CD8-positive, alpha-beta T cell (primary cell): ENCODE measurements at regions of chr13 and their contacts with region 1.

Region 1: GRCh38 chr13:30408319-30409101 is 13.8 kb upstream of the UBE2L5 start:
- DNase-seq: peak; percentile 82 to 94 (median 90)
- ATAC-seq: peak; percentile 94
- H3K4me3 ChIP-seq: peak overlapping the region; percentile 31 to 39
- H3K4me3 Mint-ChIP-seq: peak overlapping the region; percentile 72
- H3K27ac ChIP-seq: peak overlapping the region in 1 of 2 experiments; percentile 67
- H3K27ac Mint-ChIP-seq: peak overlapping the region; percentile 86
- H3K4me1 ChIP-seq: peaks cover 14% of the 10 kb centered on the region
- H3K4me1 Mint-ChIP-seq: peaks cover 27% of the 10 kb centered on the region
- H3K27me3 ChIP-seq: no peaks in the 10 kb centered on the region
- H3K27me3 Mint-ChIP-seq: no peaks in the 10 kb centered on the region
- CTCF ChIP-seq: peak; percentile 74

Region 2: DNA sequence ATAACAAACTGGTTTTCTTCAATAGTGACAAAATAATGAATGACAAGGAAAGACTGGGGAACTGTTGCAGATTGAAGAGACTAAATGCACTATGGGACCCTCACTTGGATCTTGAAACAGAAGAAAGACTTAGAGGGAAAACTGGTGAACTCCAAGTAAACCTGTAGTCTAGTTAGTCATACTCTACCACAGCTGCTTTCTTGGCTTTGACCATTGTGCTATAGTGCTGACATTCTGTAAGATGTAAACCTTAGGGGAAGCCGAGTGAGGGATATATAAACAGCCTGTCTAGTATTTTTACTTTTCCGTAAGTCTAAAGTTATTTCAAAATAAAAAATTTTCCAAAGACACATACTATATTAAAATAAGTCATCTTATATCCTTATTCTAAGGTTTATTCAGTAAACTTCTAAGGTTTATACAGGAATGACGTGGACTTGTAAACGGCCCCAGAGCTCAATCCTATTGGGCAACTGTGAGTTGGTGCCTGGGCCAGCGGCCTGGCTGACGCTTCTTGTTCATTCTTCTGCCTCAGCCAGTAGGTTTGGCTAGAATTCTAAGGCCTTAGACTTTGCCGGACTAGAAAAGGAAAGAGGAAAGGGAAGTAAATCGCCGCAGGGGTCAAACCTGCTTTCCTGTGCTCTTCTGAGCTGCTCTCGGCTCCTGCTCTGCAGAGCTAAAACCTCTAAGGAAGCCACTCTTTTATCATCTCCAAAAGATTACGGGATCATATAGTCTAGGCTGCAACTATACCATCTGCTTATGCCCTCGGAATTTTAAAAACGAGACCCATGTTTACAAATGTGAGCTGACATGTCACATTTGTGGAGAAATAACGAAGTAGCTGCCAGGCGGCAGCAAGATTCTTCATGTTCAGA is 19.9 kb before region 1 on chr13:
- CTCF ChIA-PET with region 1: interaction called, 12 read pairs
- POLR2A ChIA-PET with region 1: interaction called, 3 read pairs
- intact Hi-C with region 1: no loop called
- DNase-seq: no peak
- ATAC-seq: no peak
- H3K4me3 ChIP-seq: peak overlapping the region in 1 of 2 experiments; percentile 38
- H3K4me3 Mint-ChIP-seq: peak overlapping the region; percentile 63
- H3K27ac ChIP-seq: peak overlapping the region in 1 of 2 experiments; percentile 11
- H3K27ac Mint-ChIP-seq: peak overlapping the region; percentile 72
- H3K4me1 ChIP-seq: peaks cover 25% of the 10 kb centered on the region
- H3K4me1 Mint-ChIP-seq: peaks cover 54% of the 10 kb centered on the region
- H3K27me3 ChIP-seq: no peaks in the 10 kb centered on the region
- H3K27me3 Mint-ChIP-seq: no peaks in the 10 kb centered on the region
- CTCF ChIP-seq: no peak

Region 3: GRCh38 chr13:30395192-30396084 is 13.1 kb before region 1 on chr13:
- CTCF ChIA-PET with region 1: interaction called, 10 read pairs
- POLR2A ChIA-PET with region 1: interaction called, 7 read pairs
- intact Hi-C with region 1: loop called in 1 of 2 experiments (anchors 1 kb)
- DNase-seq: peak; percentile 44 to 88 (median 79)
- ATAC-seq: peak; percentile 62
- H3K4me3 ChIP-seq: peak overlapping the region; percentile 60 to 80
- H3K4me3 Mint-ChIP-seq: peak overlapping the region; percentile 89
- H3K27ac ChIP-seq: peak overlapping the region; percentile 83 to 84
- H3K27ac Mint-ChIP-seq: peak overlapping the region; percentile 95
- H3K4me1 ChIP-seq: peaks cover 21% of the 10 kb centered on the region
- H3K4me1 Mint-ChIP-seq: peaks cover 50% of the 10 kb centered on the region
- H3K27me3 ChIP-seq: no peaks in the 10 kb centered on the region
- H3K27me3 Mint-ChIP-seq: no peaks in the 10 kb centered on the region
- CTCF ChIP-seq: no peak

Region 4: GRCh38 chr13:30422054-30422839 is 13.7 kb after region 1 on chr13 and contains the start of gene UBE2L5:
- CTCF ChIA-PET with region 1: interaction called, 21 read pairs
- POLR2A ChIA-PET with region 1: interaction called, 9 read pairs
- intact Hi-C with region 1: loop called in 1 of 2 experiments (anchors 1 kb)
- DNase-seq: peak; percentile 31 to 82 (median 59)
- ATAC-seq: peak; percentile 88
- H3K4me3 ChIP-seq: peak within 1 kb of the TSS; percentile 41 to 58
- H3K4me3 Mint-ChIP-seq: peak within 1 kb of the TSS; percentile 88
- H3K27ac ChIP-seq: peak within 1 kb of the TSS; percentile 14 to 24
- H3K27ac Mint-ChIP-seq: peak within 1 kb of the TSS; percentile 82
- H3K4me1 ChIP-seq: peaks cover 4% of the 10 kb centered on the region
- H3K4me1 Mint-ChIP-seq: peaks cover 22% of the 10 kb centered on the region
- H3K27me3 ChIP-seq: no peaks in the 10 kb centered on the region
- H3K27me3 Mint-ChIP-seq: no peaks in the 10 kb centered on the region
- CTCF ChIP-seq: no peak
- total RNA-seq, gene UBE2L5: not detected

Region 5: DNA sequence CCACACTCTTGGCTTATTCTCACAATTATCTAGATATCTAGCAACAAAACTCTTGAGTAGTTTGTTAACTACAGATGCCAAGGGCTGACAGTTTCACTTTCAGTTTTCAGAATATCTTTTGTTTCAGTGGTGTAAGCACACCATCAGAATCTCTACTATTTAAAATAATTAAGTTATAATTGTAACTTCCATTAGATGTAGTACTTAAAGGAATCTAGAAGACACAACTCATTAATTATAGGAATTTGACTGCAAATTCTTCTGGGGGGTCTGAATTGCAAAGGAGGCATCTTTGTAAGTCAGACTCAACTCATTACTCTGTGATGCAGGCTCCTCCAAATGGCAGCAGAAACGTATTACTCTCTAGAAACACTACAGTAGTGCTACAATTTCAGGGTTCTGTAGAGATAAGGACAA is 164.4 kb after region 1 on chr13:
- CTCF ChIA-PET with region 1: no interaction called
- POLR2A ChIA-PET with region 1: interaction called, 3 read pairs
- intact Hi-C with region 1: loop called in 1 of 2 experiments (anchors 2 kb)
- DNase-seq: peak in 4 of 9 experiments; percentile 12 to 72 (median 40)
- ATAC-seq: peak; percentile 57
- H3K4me3 ChIP-seq: peak overlapping the region; percentile 23 to 51
- H3K4me3 Mint-ChIP-seq: peak overlapping the region; percentile 75
- H3K27ac ChIP-seq: peak overlapping the region; percentile 58 to 72
- H3K27ac Mint-ChIP-seq: peak overlapping the region; percentile 91
- H3K4me1 ChIP-seq: peaks cover 27% of the 10 kb centered on the region
- H3K4me1 Mint-ChIP-seq: peaks cover 32% of the 10 kb centered on the region
- H3K27me3 ChIP-seq: no peaks in the 10 kb centered on the region
- H3K27me3 Mint-ChIP-seq: no peaks in the 10 kb centered on the region
- CTCF ChIP-seq: peak; percentile 44

Region 6: GRCh38 chr13:30690282-30691188 is 282.0 kb after region 1 on chr13:
- CTCF ChIA-PET with region 1: no interaction called
- POLR2A ChIA-PET with region 1: no interaction called
- intact Hi-C with region 1: no loop called
- DNase-seq: peak in 3 of 9 experiments; percentile 27 to 53 (median 33)
- ATAC-seq: peak; percentile 51
- H3K4me3 ChIP-seq: peak overlapping the region; percentile 13 to 20
- H3K4me3 Mint-ChIP-seq: peak overlapping the region; percentile 73
- H3K27ac ChIP-seq: no peak overlapping the region
- H3K27ac Mint-ChIP-seq: peak overlapping the region; percentile 62
- H3K4me1 ChIP-seq: peaks cover 9% of the 10 kb centered on the region
- H3K4me1 Mint-ChIP-seq: peaks cover 9% of the 10 kb centered on the region
- H3K27me3 ChIP-seq: no peaks in the 10 kb centered on the region
- H3K27me3 Mint-ChIP-seq: peaks cover 7% of the 10 kb centered on the region
- CTCF ChIP-seq: no peak